ENCODE measurements at regions of chr16 and their contacts with region 1.

Region 1: DNA sequence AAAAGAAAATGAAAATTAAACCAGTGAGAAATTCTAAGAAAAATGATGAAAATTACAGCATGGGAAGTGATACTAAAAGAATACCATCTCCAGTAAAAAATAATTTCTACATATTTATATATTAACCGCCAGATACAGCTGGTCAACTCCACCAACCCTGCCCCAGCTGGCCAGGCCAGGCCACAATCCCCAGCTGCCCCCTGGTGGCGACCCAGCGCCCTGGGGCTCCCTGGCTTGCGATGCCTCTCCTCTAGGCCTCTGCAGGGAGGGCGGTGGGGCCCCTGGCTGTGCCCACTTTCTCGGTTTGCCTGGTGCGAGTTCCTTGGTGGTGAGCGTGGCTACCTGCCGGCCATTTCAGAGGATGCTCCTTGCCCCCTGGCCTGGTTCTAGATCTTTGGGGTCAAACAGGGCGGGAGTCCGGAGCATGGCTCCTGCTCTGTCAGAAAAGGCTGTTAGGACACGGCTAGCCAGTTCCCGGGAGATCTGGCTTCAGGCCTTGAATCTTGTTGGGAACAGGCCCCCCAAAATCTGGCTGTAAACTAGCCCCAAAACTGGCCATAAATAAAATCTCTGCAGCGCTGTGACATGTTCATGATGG is 14.5 kb downstream of the GLIS2 start:
- DNase-seq: peak; percentile 89 to 95
- ATAC-seq: peak; percentile 82
- H3K4me3 ChIP-seq: no peak overlapping the region
- H3K27ac ChIP-seq: no peak overlapping the region
- H3K4me1 ChIP-seq: no peaks in the 10 kb centered on the region
- H3K27me3 ChIP-seq: no peaks in the 10 kb centered on the region

Region 2: GRCh38 chr16:4194661-4195060 is 135.7 kb before region 1 on chr16:
- intact Hi-C with region 1: loop called in 1 of 2 experiments (anchors 2 kb)
- DNase-seq: no peak
- ATAC-seq: no peak
- H3K4me3 ChIP-seq: no peak overlapping the region
- H3K27ac ChIP-seq: no peak overlapping the region
- H3K4me1 ChIP-seq: no peaks in the 10 kb centered on the region
- H3K27me3 ChIP-seq: no peaks in the 10 kb centered on the region

Region 3: DNA sequence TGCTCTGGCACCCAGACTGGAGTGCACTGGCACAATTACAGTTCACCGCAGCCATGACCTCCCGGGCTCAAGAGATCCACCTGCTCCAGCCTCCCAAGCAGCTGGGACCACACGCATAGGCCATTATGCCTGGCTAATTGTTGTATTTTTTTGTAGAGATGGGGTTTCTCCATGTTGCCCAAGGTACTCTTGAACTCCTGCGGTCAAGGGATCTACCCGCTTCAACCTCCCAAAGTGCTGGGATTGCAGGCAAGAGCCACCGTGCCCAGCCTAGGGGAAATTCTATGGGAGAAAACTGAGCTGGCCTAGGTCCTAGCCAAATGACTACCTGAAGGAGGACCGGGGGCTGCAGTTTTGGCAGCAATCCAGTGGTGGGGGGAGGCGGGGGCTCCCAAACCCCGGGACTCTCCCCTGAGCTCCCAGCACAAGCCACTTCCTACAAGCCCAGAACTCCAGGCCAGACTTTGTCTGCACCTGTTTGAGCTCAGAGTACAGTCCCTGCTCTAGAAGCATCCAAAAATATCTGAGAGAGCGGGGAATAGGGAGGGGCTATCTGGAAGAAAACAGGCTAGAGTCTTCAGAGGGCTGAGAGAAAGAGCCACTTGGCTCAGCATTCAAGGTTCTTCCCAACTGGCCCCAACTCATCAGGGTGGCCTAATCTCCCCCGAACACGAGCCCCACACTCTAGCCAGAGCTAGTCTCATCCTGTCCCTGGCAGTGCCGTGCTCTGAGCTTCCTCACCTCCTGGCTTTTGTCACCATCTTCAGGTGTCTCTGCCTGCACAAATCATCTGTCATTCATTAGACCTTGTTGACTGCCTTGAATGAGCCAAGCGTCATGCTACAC is 97.6 kb before region 1 on chr16:
- intact Hi-C with region 1: no loop called
- DNase-seq: no peak
- ATAC-seq: no peak
- H3K4me3 ChIP-seq: no peak overlapping the region
- H3K27ac ChIP-seq: no peak overlapping the region
- H3K4me1 ChIP-seq: no peaks in the 10 kb centered on the region
- H3K27me3 ChIP-seq: no peaks in the 10 kb centered on the region

Region 4: DNA sequence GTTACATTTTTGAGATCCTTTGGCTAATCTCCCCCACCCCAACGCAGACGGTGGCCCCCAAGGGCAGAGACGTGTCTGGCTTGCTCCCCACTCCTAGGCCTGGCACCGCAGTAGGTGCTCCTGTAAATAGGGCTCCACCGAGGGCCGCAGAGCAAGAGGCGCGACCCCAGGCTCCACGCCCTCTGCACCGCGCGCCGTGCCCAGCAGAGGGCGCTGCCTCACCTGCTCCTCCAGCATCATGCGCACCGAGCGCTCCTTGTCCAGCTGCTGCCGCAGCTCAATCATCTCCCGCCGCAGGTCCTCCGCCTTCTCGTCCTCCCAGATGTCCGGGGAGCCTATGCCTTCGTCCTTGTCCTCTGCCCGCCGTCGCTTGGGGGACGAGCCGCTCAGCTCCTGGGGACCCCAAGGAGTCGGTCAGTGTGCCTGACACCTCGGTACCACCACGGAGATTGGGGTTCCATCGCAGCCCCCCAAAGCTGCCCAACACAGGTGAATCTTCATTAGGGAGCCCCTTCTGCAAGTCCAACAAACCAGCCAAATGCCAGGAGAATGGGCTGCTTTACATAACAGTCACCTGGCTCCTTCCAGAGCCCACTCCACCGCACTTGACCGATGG is 68.7 kb before region 1 on chr16:
- intact Hi-C with region 1: loop called (anchors 1 to 2 kb)
- DNase-seq: no peak
- ATAC-seq: peak; percentile 41
- H3K4me3 ChIP-seq: no peak overlapping the region
- H3K27ac ChIP-seq: no peak overlapping the region
- H3K4me1 ChIP-seq: no peaks in the 10 kb centered on the region
- H3K27me3 ChIP-seq: no peaks in the 10 kb centered on the region

Region 5: DNA sequence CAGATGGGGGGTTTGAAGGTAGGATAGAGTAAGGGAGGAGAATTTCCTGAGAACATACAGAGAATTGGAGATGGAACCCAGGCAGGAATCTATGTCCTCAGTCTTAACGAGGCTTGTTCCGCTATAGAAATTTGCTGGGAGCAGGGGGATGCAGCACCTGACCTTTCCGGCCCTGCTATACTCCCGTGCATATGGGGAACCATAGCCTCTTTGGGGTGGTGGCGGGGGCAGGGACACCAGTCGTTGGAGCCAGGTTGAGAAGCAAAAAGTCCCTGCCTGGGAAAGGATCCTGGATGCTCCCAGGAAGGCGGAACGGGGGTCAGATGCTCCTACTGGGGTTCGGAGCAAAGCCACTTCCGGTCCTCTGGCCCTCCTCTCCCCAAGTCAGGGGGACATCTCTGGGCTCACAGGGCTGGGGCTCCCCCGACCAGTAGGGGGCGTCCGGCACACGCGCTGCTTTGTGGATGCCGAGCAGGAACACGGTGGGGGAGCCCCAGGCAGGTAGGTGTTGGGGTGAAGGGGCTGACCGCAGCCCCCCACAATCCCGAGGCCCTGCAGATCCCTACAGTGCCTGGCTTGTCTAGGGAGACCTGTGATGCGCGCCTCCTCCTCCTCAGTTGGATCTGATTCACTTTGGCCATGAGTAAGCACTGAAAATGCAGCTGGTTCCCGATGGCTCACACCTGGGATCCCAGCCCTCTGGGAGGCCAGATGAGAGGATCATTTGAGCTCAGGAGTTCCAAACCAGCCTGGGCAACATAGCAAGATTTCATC is 42.0 kb before region 1 on chr16:
- intact Hi-C with region 1: loop called (anchors 1 to 5 kb)
- DNase-seq: peak; percentile 77 to 94
- ATAC-seq: peak; percentile 80
- H3K4me3 ChIP-seq: no peak overlapping the region
- H3K27ac ChIP-seq: no peak overlapping the region
- H3K4me1 ChIP-seq: no peaks in the 10 kb centered on the region
- H3K27me3 ChIP-seq: no peaks in the 10 kb centered on the region

Region 6: GRCh38 chr16:4350787-4351659 is 20.6 kb after region 1 on chr16 and contains the start of gene PAM16:
- intact Hi-C with region 1: no loop called
- DNase-seq: peak; percentile 98 to 100
- ATAC-seq: peak; percentile 96
- H3K4me3 ChIP-seq: peak within 1 kb of the TSS; percentile 69 to 78
- H3K27ac ChIP-seq: peak within 1 kb of the TSS in 1 of 2 donors; percentile 34
- H3K4me1 ChIP-seq: no peaks in the 10 kb centered on the region
- H3K27me3 ChIP-seq: no peaks in the 10 kb centered on the region
- total RNA-seq, gene PAM16: 23.6 to 25.5 TPM